ENCODE measurements at regions of chr20 and their contacts with region 1.

Region 1: GRCh38 chr20:25223179-25223661 is 24.7 kb upstream of the PYGB start:
- DNase-seq: peak; percentile 92 to 97
- ATAC-seq: peak; percentile 88
- H3K4me3 ChIP-seq: no peak overlapping the region
- H3K27ac ChIP-seq: peak overlapping the region; percentile 79 to 88
- H3K4me1 ChIP-seq: peaks cover 67% of the 10 kb centered on the region
- CTCF ChIP-seq: peak; percentile 47
- EP300 ChIP-seq: peak in 1 of 2 experiments; percentile 39; a peak in 1 of 5 replicates
- POLR2A ChIP-seq: no peak
- RAD21 ChIP-seq: peak; percentile 66 to 67

Region 2: DNA sequence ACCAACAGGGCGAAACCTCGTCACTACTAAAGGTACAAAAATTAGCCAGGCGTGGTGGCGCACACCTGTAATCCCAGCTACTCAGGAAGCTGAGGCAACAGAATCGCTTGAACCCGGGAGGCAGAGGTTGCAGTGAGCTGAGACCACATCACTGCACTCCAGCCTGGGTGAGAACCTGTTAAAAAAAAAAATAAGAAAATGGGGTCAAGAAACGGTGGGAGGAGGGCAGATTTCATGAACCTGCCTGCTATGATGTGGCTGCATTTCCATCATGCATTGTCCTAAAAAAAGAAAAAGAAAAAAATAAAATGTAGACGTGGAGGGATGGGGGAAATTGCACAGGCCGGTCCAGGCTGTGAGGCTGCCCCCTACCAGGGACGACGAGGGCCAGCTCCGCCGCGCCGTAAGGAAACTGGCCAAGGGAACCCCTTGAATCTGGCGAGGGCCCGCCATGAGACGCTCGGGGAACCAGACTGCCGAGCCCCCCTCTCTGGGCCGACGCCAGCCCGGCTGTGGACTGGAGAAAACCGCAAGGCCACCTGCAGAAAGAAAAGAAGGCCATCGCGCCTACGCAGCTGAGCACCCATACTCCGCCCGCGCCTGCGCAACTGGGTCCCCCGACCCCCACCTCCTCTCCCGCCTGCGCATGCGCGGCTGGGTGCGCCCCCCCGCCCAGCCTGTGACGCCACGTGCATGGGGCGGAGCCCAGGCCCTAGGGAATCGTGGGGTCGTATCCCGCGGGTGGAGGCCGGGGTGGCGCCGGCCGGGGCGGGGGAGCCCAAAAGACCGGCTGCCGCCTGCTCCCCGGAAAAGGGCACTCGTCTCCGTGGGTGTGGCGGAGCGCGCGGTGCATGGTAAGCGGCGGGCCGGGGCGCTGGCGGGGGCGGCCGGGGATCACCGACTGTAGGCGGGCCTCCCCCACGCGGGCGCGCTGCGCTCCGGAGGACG is 27.9 kb before region 1 on chr20 and contains the start of gene ENTPD6:
- CTCF ChIA-PET with region 1: interaction called, 4 read pairs
- POLR2A ChIA-PET with region 1: interaction called, 10 read pairs
- DNase-seq: peak; percentile 93 to 98
- ATAC-seq: peak; percentile 84 to 89
- H3K4me3 ChIP-seq: peak within 1 kb of the TSS; percentile 95
- H3K27ac ChIP-seq: peak within 1 kb of the TSS; percentile 92 to 94
- H3K4me1 ChIP-seq: peaks cover 28% of the 10 kb centered on the region
- CTCF ChIP-seq: peak; percentile 46
- EP300 ChIP-seq: no peak
- POLR2A ChIP-seq: peak; percentile 94
- RAD21 ChIP-seq: peak; percentile 13 to 35; a peak in 3 of 5 replicates
- polyA plus RNA-seq, gene ENTPD6: 85.7 and 95.4 TPM in 2 replicates

Region 3: DNA sequence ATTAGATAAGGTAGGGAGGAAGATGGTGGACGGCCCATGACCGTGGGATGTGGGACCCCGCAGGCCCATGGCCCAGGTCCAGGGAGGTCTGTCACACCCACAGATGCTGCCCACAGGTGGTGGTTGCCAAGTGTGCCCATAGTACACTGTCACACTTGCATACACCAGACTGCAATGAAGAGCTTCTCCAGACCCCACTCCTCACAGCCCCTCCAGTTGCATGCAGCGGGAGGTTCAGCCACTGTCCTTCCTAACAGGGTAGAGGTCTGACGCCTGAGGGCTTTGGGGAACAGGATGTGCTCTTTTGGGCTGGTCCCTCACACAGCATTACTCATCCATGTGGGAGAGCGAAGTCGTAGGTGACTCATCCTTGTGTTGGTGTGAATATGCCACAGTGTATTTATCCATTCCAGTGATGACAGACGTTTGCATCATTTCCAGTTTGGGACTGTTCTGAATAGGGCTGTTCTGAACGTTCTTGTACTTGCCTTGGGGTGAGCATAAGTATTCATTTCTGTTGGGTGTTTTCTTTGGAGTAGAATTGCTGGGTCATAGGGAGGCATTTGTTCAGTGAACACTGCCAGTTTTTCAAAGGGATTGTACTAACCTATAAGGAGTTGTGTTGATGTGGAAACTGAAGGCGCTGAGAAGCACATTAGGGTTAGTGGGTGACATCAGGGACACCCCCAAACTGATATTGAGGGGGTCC is 14.5 kb after region 1 on chr20:
- CTCF ChIA-PET with region 1: interaction called, 300 read pairs
- POLR2A ChIA-PET with region 1: interaction called, 3 read pairs
- DNase-seq: peak; percentile 99 to 100
- ATAC-seq: peak; percentile 85 to 90
- H3K4me3 ChIP-seq: no peak overlapping the region
- H3K27ac ChIP-seq: peak overlapping the region; percentile 95 to 97
- H3K4me1 ChIP-seq: peaks cover 78% of the 10 kb centered on the region
- CTCF ChIP-seq: no peak
- EP300 ChIP-seq: peak; percentile 97
- POLR2A ChIP-seq: no peak
- RAD21 ChIP-seq: peak in 1 of 2 experiments; percentile 42; a peak in 3 of 5 replicates